MCF 10A (cell line): ENCODE measurements at regions of chr3 and their contacts with region 1.

Region 1: GRCh38 chr3:186821429-186822367 is 15.4 kb upstream of the RFC4 start:
- DNase-seq: peak; percentile 78
- H3K4me3 Mint-ChIP-seq: no peak overlapping the region
- H3K27ac Mint-ChIP-seq: no peak overlapping the region
- H3K4me1 Mint-ChIP-seq: peaks cover 19% of the 10 kb centered on the region
- H3K27me3 Mint-ChIP-seq: no peaks in the 10 kb centered on the region
- CTCF ChIP-seq: peak; percentile 66

Region 2: DNA sequence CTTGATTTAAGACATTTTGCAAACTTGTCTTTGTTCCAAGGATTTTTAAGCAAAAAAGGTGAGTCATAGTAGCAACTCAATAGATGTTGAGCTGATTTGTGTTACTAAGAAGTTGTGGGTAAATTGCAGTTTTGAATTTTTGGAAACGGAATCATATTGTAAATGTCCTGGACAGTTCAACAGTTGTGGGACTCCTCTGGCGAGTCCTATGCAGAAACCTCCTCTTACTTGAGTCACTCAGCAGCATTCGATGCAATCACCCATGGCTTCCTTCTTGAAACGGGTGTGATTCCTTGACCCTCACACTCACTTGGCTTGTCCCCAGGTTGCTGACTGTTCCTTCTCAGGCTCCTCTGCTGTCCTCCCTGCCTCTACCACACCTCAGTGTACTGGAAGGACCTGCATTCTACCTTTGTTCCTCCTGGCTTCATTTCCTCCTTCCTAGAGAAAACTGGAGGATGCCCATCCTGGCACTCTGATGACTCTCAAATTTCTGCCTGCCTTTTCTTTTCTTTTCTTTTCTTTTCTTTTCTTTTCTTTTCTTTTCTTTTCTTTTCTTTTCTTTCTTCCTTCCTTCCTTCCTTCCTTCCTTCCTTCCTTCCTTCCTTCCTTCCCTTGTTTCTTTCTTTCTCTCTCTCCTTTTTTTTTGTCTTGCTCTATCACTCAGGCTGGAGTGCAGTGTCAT is 406.8 kb before region 1 on chr3:
- CTCF ChIA-PET with region 1: no interaction called
- POLR2A ChIA-PET with region 1: no interaction called
- intact Hi-C with region 1: no loop called
- DNase-seq: peak; percentile 84
- H3K4me3 Mint-ChIP-seq: peak overlapping the region; percentile 65
- H3K27ac Mint-ChIP-seq: peak overlapping the region; percentile 66
- H3K4me1 Mint-ChIP-seq: peaks cover 52% of the 10 kb centered on the region
- H3K27me3 Mint-ChIP-seq: no peaks in the 10 kb centered on the region
- CTCF ChIP-seq: no peak

Region 3: DNA sequence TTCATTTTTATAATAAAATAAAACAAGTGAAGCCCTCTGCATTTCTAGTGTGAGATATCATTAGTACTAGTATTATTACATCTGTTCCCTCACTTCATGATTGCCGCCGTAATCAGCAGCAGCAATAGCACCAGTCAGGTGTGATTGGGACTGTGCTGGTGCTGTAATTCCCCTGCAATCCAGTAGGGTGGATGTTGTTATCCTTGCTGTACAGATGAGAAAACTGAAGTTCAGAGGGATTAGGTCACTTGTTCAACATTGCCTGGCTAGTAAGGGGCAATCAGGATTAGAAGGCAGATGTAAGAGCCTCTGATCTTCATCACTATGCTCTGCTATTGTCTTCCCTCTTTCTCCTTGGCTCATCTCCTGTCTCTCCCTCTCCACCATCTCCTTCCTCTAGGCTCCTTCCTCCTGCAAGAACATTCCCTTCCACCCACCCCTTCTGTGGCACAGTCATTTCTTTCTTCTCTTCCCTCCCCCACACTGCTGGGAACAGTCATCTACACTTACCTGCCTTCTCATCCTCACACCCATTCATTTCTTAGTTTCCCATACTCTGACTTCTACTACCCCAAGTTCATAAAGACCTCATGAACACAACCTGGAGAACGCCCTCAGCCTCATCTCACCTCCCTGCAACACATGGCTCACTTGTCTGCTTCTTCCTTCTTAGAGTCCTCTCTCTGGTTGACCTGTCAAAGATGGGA is 307.2 kb before region 1 on chr3:
- CTCF ChIA-PET with region 1: no interaction called
- POLR2A ChIA-PET with region 1: no interaction called
- intact Hi-C with region 1: no loop called
- DNase-seq: peak; percentile 23
- H3K4me3 Mint-ChIP-seq: no peak overlapping the region
- H3K27ac Mint-ChIP-seq: no peak overlapping the region
- H3K4me1 Mint-ChIP-seq: peaks cover 10% of the 10 kb centered on the region
- H3K27me3 Mint-ChIP-seq: peaks cover 55% of the 10 kb centered on the region
- CTCF ChIP-seq: peak; percentile 35

Region 4: GRCh38 chr3:186609247-186609868 is 212.3 kb before region 1 on chr3:
- CTCF ChIA-PET with region 1: interaction called, 96 read pairs
- POLR2A ChIA-PET with region 1: no interaction called
- intact Hi-C with region 1: no loop called
- DNase-seq: peak; percentile 74
- H3K4me3 Mint-ChIP-seq: no peak overlapping the region
- H3K27ac Mint-ChIP-seq: peak overlapping the region; percentile 27
- H3K4me1 Mint-ChIP-seq: peaks cover 7% of the 10 kb centered on the region
- H3K27me3 Mint-ChIP-seq: no peaks in the 10 kb centered on the region
- CTCF ChIP-seq: peak; percentile 57

Region 5: DNA sequence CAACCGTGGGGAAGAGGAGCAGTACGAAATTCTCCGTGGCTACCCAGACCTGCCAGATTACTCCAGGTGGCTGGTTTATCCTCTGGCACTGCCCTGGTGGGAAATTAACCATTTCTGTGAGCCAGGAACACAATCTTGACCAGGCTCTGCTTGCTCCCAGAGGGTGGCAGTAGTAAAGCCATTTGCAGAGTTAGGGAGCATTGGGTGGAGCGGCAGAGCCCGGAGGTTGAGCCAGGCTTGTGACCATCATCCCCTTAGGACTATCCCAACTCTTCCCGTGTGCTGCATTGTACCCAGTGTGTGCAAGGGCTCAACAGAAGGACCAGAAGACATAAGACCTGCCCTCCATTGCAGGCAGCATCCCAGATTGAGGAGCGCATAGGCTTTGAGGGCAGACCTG is 99.2 kb before region 1 on chr3:
- CTCF ChIA-PET with region 1: no interaction called
- POLR2A ChIA-PET with region 1: no interaction called
- intact Hi-C with region 1: loop called (anchors 1 kb)
- DNase-seq: peak; percentile 16
- H3K4me3 Mint-ChIP-seq: no peak overlapping the region
- H3K27ac Mint-ChIP-seq: no peak overlapping the region
- H3K4me1 Mint-ChIP-seq: no peaks in the 10 kb centered on the region
- H3K27me3 Mint-ChIP-seq: no peaks in the 10 kb centered on the region
- CTCF ChIP-seq: no peak

Region 6: DNA sequence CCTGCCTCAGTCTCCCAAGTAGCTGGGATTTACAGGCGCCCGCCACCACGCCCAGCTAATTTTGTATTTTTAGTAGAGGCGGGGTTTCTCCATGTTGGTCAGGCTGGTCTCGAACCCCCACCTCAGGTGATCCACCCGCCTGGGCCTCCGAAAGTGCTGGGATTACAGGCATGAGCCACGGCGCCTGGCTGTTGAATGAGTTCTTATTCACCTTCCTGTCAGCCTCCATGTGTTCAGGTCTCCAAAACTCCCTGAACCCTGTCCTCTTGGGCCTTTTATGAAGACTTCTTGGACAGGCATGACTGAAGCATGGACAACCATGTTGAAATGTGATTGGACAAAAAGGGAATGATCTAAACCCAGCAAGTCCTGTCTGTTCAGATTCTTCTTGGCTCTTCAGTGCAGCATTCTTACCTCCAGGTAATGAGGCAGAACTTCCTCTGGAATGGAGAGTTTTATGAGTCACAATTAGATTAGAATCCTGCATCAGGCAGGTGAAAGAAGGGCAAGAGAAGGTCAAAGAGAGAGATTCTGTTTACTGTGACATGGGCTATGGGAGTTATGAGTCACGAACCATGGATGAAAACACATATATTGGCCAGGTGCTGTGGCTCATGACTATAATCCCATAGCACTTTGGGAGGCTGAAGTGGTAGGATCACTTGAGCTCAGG is 61.4 kb before region 1 on chr3:
- CTCF ChIA-PET with region 1: no interaction called
- POLR2A ChIA-PET with region 1: no interaction called
- intact Hi-C with region 1: no loop called
- DNase-seq: peak; percentile 50
- H3K4me3 Mint-ChIP-seq: no peak overlapping the region
- H3K27ac Mint-ChIP-seq: no peak overlapping the region
- H3K4me1 Mint-ChIP-seq: peaks cover 5% of the 10 kb centered on the region
- H3K27me3 Mint-ChIP-seq: no peaks in the 10 kb centered on the region
- CTCF ChIP-seq: no peak

Region 7: DNA sequence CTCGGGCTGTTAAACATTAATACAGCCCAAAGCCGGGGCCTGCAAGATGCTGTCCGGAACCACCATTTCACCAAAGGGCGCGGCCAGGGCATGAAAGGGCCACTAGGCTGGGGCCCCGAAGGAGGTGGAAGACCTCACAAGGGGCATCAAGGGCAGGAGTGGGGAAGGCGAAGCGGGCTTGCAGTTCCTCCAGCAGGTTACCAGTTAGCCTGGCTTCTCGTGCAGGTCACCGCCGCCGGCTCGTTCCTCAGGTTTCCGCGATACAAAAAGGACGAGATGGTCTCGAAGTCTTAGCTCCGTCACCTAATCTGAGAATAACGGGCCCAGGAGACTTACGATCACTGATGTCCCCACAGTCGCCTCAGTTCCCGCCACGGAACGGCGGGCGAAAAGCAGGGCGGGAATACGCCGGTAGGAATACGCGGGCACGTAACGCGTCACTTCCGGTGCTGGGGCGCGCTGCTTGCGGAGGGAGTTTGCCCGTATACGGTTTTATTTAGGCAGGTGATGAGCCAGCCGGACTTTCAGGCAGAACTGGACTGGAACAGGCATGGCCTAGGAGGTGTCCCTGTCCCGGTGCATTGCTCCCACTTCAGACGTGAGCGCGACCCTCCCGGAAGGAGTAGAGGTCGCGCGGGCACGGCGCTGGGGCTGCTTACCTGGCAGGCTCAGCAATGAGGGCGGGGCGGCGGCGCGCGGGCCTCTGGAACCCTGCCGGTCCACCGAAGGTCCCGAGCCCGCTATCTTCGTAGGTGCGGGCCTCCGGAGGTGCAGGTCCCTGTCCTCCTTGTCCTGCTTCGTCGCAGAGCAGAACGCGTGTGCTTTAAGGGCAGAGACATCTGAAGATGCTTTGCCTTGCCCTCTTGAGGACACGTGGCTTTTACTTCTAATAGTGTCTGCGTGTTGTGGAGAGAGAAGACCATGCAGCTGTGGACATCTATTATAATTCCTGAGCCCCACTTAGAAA is 15.3 kb before region 1 on chr3 and contains the start of gene RFC4:
- CTCF ChIA-PET with region 1: interaction called, 15 read pairs
- POLR2A ChIA-PET with region 1: interaction called, 6 read pairs
- intact Hi-C with region 1: no loop called
- DNase-seq: peak; percentile 77
- H3K4me3 Mint-ChIP-seq: peak within 1 kb of the TSS; percentile 79
- H3K27ac Mint-ChIP-seq: peak within 1 kb of the TSS; percentile 83
- H3K4me1 Mint-ChIP-seq: peaks cover 6% of the 10 kb centered on the region
- H3K27me3 Mint-ChIP-seq: no peaks in the 10 kb centered on the region
- CTCF ChIP-seq: no peak
- total RNA-seq, gene RFC4: 23.9 and 33.2 TPM in 2 replicates

Region 8: GRCh38 chr3:187758318-187758955 is 936.7 kb after region 1 on chr3:
- CTCF ChIA-PET with region 1: no interaction called
- POLR2A ChIA-PET with region 1: no interaction called
- intact Hi-C with region 1: no loop called
- DNase-seq: no peak
- H3K4me3 Mint-ChIP-seq: no peak overlapping the region
- H3K27ac Mint-ChIP-seq: no peak overlapping the region
- H3K4me1 Mint-ChIP-seq: no peaks in the 10 kb centered on the region
- H3K27me3 Mint-ChIP-seq: no peaks in the 10 kb centered on the region
- CTCF ChIP-seq: no peak